OCI-LY7 (cell line): ENCODE measurements at regions of chr11 and their contacts with region 1.

Region 1: DNA sequence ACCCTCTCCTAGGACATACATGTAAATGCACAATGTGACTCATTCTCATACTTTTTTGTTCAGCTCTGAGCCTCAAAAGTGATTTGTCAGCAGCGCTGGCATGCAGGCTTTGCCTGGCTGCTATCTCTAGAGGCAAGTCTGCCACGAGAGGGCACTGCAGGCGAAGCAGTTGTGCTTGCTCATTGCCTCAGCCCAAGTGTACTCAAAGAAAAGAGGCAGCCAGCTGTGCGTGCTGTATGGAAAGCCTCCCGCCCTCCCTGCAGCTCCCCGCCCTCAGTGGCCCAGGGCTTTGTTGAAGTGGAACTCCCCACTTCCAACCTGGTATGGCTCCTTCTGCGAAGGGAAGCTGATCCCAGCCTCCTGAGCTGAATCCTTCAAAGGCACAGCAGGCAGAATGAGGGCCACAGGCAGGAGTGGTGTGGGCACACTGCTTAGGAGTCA is 16.3 kb downstream of the SDHAF2 start:
- DNase-seq: peak; percentile 79
- H3K4me3 ChIP-seq: no peak overlapping the region
- H3K27ac ChIP-seq: no peak overlapping the region
- H3K4me1 ChIP-seq: peaks cover 3% of the 10 kb centered on the region
- CTCF ChIP-seq: peak; percentile 89

Region 2: GRCh38 chr11:61406991-61407728 is 39.1 kb before region 1 on chr11:
- CTCF ChIA-PET with region 1: no interaction called
- POLR2A ChIA-PET with region 1: no interaction called
- intact Hi-C with region 1: no loop called
- DNase-seq: no peak
- H3K4me3 ChIP-seq: no peak overlapping the region
- H3K27ac ChIP-seq: no peak overlapping the region
- H3K4me1 ChIP-seq: no peaks in the 10 kb centered on the region
- CTCF ChIP-seq: no peak

Region 3: DNA sequence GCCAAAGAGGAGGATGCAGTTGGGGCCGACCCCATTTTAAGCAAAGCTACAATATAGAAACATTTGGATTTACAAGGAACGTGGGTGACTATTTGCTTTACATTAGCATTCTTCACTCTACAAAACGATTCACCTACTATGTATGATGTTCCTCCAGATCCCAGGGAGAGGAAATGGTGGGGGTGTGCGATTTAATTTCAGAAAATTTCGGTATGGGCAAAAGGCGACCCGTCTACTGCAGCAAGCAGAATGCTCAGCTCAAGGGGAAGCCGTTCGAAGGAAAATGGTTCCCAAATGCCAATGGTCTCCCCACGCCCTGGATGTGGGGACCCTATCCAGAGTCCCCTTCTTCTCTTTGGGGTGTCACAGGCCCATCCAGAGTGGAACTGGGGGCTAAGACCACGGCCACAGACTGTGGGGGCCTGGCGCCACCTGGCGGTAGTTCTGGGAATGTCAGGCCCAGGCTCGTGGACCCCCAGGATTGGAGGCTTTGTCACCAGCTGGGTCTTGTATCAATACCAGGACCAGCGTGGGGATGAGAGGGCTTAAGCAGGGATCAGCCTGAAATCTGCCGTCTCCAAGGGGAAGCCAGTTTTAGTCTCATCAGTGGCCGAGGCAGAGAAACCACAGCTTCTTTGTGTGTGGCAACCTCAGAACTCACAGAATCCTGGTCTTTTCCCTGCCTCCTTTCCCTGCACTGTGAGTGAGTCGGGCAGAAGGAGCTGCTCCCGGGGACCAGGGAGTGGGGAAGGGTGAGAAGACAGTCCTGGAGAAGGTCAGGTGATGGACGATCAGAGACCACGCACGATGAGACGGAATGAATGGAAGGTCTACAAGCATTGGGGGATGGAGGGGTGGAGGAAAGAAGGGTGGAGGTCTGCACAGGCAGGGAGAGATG is 70.7 kb after region 1 on chr11:
- CTCF ChIA-PET with region 1: no interaction called
- POLR2A ChIA-PET with region 1: no interaction called
- intact Hi-C with region 1: loop called (anchors 1 kb)
- DNase-seq: peak; percentile 48
- H3K4me3 ChIP-seq: no peak overlapping the region
- H3K27ac ChIP-seq: no peak overlapping the region
- H3K4me1 ChIP-seq: no peaks in the 10 kb centered on the region
- CTCF ChIP-seq: peak; percentile 97